WTC11 (cell line): ENCODE measurements at regions of chr10 and their contacts with region 1.

Region 1: GRCh38 chr10:17394854-17395253 is 59.5 kb downstream of the ST8SIA6 start:
- DNase-seq: no peak
- ATAC-seq: no peak
- H3K4me3 Mint-ChIP-seq: no peak overlapping the region
- H3K27ac Mint-ChIP-seq: no peak overlapping the region
- H3K4me1 Mint-ChIP-seq: no peaks in the 10 kb centered on the region
- H3K27me3 Mint-ChIP-seq: no peaks in the 10 kb centered on the region; the same call in 1 of the 2 replicates
- CTCF ChIP-seq: no peak

Region 2: GRCh38 chr10:17255512-17255911 is 139.3 kb before region 1 on chr10:
- CTCF ChIA-PET with region 1: no interaction called
- POLR2A ChIA-PET with region 1: interaction called, 10 read pairs
- DNase-seq: no peak
- ATAC-seq: no peak
- H3K4me3 Mint-ChIP-seq: no peak overlapping the region
- H3K27ac Mint-ChIP-seq: no peak overlapping the region
- H3K4me1 Mint-ChIP-seq: peaks cover 6% of the 10 kb centered on the region
- H3K27me3 Mint-ChIP-seq: no peaks in the 10 kb centered on the region
- CTCF ChIP-seq: no peak

Region 3: GRCh38 chr10:17290226-17290625 is 104.6 kb before region 1 on chr10:
- CTCF ChIA-PET with region 1: no interaction called
- POLR2A ChIA-PET with region 1: no interaction called
- DNase-seq: no peak
- ATAC-seq: peak; percentile 59; the same call in 1 of the 2 replicates
- H3K4me3 Mint-ChIP-seq: no peak overlapping the region
- H3K27ac Mint-ChIP-seq: no peak overlapping the region
- H3K4me1 Mint-ChIP-seq: peaks cover 7% of the 10 kb centered on the region; the same call in 1 of the 2 replicates
- H3K27me3 Mint-ChIP-seq: no peaks in the 10 kb centered on the region
- CTCF ChIP-seq: no peak